Heart left ventricle (tissue), 16 donors: ENCODE measurements at regions of chr19 and their contacts with region 1.

Region 1: DNA sequence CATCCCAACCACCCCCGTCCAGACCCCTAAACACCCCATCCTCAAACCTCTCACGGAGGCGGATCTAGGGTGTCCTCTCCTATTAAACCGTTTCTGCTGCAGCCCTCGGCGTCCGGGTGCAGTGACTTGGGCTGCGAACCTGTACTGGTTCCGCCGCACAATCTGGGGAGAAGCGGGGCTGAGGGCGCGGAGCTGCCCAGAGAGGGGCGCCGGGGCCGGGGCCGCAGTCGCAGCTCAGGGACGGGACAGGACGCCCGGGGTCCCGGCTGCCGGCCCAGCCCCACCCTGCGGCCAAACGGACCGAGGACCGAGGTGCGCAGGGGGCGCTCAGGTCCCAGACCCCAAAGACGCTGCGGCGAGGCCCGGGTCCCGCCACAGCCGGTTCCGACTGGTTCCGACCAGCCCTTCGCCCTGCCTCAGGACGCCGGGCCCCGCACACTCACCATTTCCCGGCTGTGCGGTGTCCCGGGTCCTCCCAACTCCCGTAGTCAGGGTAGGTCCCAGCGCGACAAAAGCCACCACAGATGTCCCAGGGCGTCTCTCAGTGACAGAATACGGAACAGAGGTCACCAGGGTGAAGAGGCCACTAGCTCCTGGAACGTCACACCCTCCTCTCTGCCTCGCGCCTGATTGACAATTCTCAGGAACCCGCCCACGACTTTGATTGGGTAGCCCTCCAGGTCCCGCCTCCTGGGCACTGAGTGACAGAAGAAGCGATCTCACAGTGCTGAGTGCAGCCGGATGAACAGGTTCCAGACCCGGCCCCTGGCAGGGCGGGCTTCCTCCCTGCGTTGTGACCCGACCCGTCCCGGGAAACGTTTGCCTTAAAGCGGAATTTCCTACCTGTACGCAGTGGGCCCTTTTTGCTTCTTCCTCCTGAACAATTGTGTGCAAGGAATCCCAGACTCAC is at the start of gene ZNF44:
- DNase-seq: peak; percentile 98 to 99 (median 99)
- ATAC-seq: peak; percentile 99
- H3K4me3 ChIP-seq: peak within 1 kb of the TSS; percentile 58 to 99 (median 92)
- H3K27ac ChIP-seq: peak within 1 kb of the TSS; percentile 85 to 98 (median 96)
- H3K4me1 ChIP-seq: peaks cover 0 to 43% (median 25%) of the 10 kb centered on the region in 12 donors
- H3K27me3 ChIP-seq: no peaks in the 10 kb centered on the region
- CTCF ChIP-seq: no peak
- POLR2A ChIP-seq: peak; percentile 40 to 85
- total RNA-seq, gene ZNF44: 4.3 to 13.7 (median 9.5) TPM

Region 2: GRCh38 chr19:12162882-12163806 is 131.4 kb before region 1 on chr19 and contains the start of gene ZNF136:
- intact Hi-C with region 1: loop called in 2 of 10 experiments (anchors 10 kb)
- DNase-seq: peak; percentile 96 to 97 (median 97)
- ATAC-seq: peak; percentile 98 to 99 (median 99)
- H3K4me3 ChIP-seq: peak within 1 kb of the TSS; percentile 70 to 99 (median 84)
- H3K27ac ChIP-seq: peak within 1 kb of the TSS; percentile 82 to 98 (median 94)
- H3K4me1 ChIP-seq: peaks cover 0 to 42% (median 33%) of the 10 kb centered on the region in 12 donors
- H3K27me3 ChIP-seq: no peaks in the 10 kb centered on the region
- CTCF ChIP-seq: peak in 1 of 12 donors; percentile 4
- POLR2A ChIP-seq: peak in 1 of 2 donors; percentile 79
- total RNA-seq, gene ZNF136: 2.7 to 7.5 (median 4.8) TPM

Region 3: GRCh38 chr19:12333162-12334159 is 39.0 kb after region 1 on chr19 and contains the start of gene ZNF563:
- intact Hi-C with region 1: loop called in 6 of 10 experiments (anchors 2 to 5 kb)
- DNase-seq: peak; percentile 96 to 99 (median 98)
- ATAC-seq: peak; percentile 97 to 99 (median 99)
- H3K4me3 ChIP-seq: peak within 1 kb of the TSS; percentile 63 to 99 (median 80)
- H3K27ac ChIP-seq: peak within 1 kb of the TSS; percentile 79 to 97 (median 90)
- H3K4me1 ChIP-seq: peaks cover 0 to 37% (median 17%) of the 10 kb centered on the region in 12 donors
- H3K27me3 ChIP-seq: no peaks in the 10 kb centered on the region
- CTCF ChIP-seq: no peak
- POLR2A ChIP-seq: peak; percentile 46 to 95
- total RNA-seq, gene ZNF563: 1.5 to 6.9 (median 3.8) TPM

Region 4: GRCh38 chr19:12365236-12366162 is 71.0 kb after region 1 on chr19 and contains the start of gene ZNF442:
- intact Hi-C with region 1: loop called in 3 of 10 experiments (anchors 1 to 2 kb)
- DNase-seq: peak; percentile 94 to 99 (median 98)
- ATAC-seq: peak; percentile 99 to 100 (median 99)
- H3K4me3 ChIP-seq: peak within 1 kb of the TSS; percentile 66 to 99 (median 94)
- H3K27ac ChIP-seq: peak within 1 kb of the TSS; percentile 77 to 97 (median 90)
- H3K4me1 ChIP-seq: peaks cover 0 to 19% (median 11%) of the 10 kb centered on the region in 12 donors
- H3K27me3 ChIP-seq: no peaks in the 10 kb centered on the region
- CTCF ChIP-seq: peak; percentile 22 to 83 (median 66)
- POLR2A ChIP-seq: peak; percentile 9 to 93
- total RNA-seq, gene ZNF442: 1.1 to 4.3 (median 3.6) TPM

Region 5: GRCh38 chr19:12440541-12441316 is 146.2 kb after region 1 on chr19 and contains the start of gene ZNF443:
- intact Hi-C with region 1: loop called in 1 of 10 experiments (anchors 5 kb)
- DNase-seq: peak; percentile 98 to 99 (median 99)
- ATAC-seq: peak; percentile 100
- H3K4me3 ChIP-seq: peak within 1 kb of the TSS; percentile 58 to 87 (median 76)
- H3K27ac ChIP-seq: peak within 1 kb of the TSS; percentile 40 to 87 (median 76)
- H3K4me1 ChIP-seq: peaks cover 0 to 12% (median 0%) of the 10 kb centered on the region in 12 donors
- H3K27me3 ChIP-seq: no peaks in the 10 kb centered on the region
- CTCF ChIP-seq: peak in 2 of 12 donors; percentile 12 to 21
- POLR2A ChIP-seq: peak in 1 of 2 donors; percentile 59
- total RNA-seq, gene ZNF443: 1.5 to 3.6 (median 2.1) TPM